Activated T-helper 1 cell treated with anti-CD3 and anti-CD28 coated beads, Interleukin-12 subunit alpha, Interleukin-12 subunit beta, Interleukin-2, Interleukin-4 antibody, amounts not matched to agents 30 ng/mL and 10 ng/mL and 1 ng/mL, durations not matched to agents 14 hours and 24 hours and 36 hours (primary cell): ENCODE measurements at regions of chr11 and their contacts with region 1.

Region 1: GRCh38 chr11:94171693-94172440 is 43.2 kb downstream of the PANX1 start:
- DNase-seq: no peak
- H3K4me3 Mint-ChIP-seq: no peak overlapping the region
- H3K27ac Mint-ChIP-seq: no peak overlapping the region
- H3K4me1 Mint-ChIP-seq: peaks cover 16% of the 10 kb centered on the region
- H3K27me3 Mint-ChIP-seq: no peaks in the 10 kb centered on the region

Region 2: DNA sequence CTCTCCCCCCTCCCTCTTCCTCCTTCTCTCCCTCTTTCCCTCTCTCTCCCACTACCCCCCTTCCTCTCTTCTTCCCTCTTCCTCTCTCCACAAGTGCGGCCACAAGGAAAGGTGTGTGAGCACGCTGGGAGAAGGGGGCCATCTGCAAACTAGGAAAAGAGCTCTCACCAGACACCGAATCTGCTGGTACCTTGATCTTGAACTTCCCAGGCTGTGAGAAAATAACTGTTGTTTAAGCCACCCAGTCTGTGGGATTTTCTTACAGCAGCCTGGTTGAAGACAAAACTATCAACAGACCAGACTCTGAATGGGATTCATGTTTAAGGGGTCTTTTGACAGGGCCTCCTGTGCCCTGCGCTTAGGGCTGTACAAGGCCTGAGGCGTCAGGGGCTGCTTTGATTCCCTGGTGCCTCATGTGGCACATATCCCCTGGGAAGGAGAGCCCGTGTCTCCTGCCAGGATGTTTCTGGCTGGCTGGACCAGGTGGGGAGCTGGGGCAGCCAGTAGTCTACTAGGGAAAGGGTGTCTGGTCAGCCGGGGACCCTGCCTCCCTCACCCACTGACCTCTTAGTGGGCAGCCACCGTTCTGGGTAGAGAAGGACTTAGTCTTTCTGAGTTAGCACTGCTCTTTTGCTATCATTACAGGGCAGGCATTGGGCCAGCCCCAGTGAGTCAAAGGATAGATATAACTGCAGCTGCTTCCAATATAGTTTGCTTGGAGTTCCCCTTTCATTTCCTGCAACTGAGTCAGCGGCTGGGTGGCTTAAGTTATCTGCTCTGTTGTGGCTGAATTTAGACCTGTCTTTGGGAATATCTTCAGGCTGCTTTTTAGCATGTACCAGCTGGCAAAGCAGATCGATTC is 37.0 kb before region 1 on chr11:
- intact Hi-C with region 1: loop called (anchors 5 kb)
- DNase-seq: peak; percentile 9
- H3K4me3 Mint-ChIP-seq: peak overlapping the region; percentile 60
- H3K27ac Mint-ChIP-seq: peak overlapping the region; percentile 45
- H3K4me1 Mint-ChIP-seq: peaks cover 48% of the 10 kb centered on the region
- H3K27me3 Mint-ChIP-seq: no peaks in the 10 kb centered on the region